Dorsolateral prefrontal cortex (tissue), 120 donors: ENCODE measurements at regions of chr13 and their contacts with region 1.

Region 1: GRCh38 chr13:76991796-76992547 is at the start of gene CLN5:
- DNase-seq: peak; percentile 81 to 97 (median 90)
- H3K4me3 ChIP-seq: peak within 1 kb of the TSS; percentile 57 to 96 (median 85)
- H3K27ac ChIP-seq: peak within 1 kb of the TSS; percentile 57 to 97 (median 91)
- H3K27me3 ChIP-seq: no peaks in the 10 kb centered on the region
- CTCF ChIP-seq: peak in 43 of 56 donors; percentile 6 to 63 (median 34)
- total RNA-seq, gene CLN5: 15.1 to 34.3 (median 21.5) TPM

Region 2: GRCh38 chr13:75675421-75675820 is 1316.6 kb before region 1 on chr13:
- intact Hi-C with region 1: loop called in 1 of 2 experiments (anchors 5 kb)
- DNase-seq: no peak
- H3K4me3 ChIP-seq: peak overlapping the region in 4 of 59 donors; percentile 22 to 24 (median 22)
- H3K27ac ChIP-seq: no peak overlapping the region
- H3K27me3 ChIP-seq: no peaks in the 10 kb centered on the region
- CTCF ChIP-seq: no peak

Region 3: GRCh38 chr13:76886292-76887075 is 105.5 kb before region 1 on chr13 and contains the start of gene KCTD12:
- intact Hi-C with region 1: loop called in 1 of 2 experiments (anchors 10 kb)
- DNase-seq: peak; percentile 36 to 82 (median 70)
- H3K4me3 ChIP-seq: peak within 1 kb of the TSS; percentile 56 to 83 (median 72)
- H3K27ac ChIP-seq: peak within 1 kb of the TSS in 58 of 59 donors; percentile 12 to 93 (median 82)
- H3K27me3 ChIP-seq: peaks cover 0 to 5% (median 0%) of the 10 kb centered on the region in 45 donors
- CTCF ChIP-seq: peak in 40 of 56 donors; percentile 14 to 56 (median 30)
- total RNA-seq, gene KCTD12: 17.8 to 89.0 (median 40.6) TPM

Region 4: GRCh38 chr13:77026818-77027585 is 35.0 kb after region 1 on chr13 and contains the start of gene FBXL3:
- intact Hi-C with region 1: loop called (anchors 2 kb)
- DNase-seq: peak; percentile 70 to 87 (median 84)
- H3K4me3 ChIP-seq: peak within 1 kb of the TSS; percentile 80 to 99 (median 91)
- H3K27ac ChIP-seq: peak within 1 kb of the TSS; percentile 84 to 100 (median 99)
- H3K27me3 ChIP-seq: no peaks in the 10 kb centered on the region
- CTCF ChIP-seq: peak in 18 of 56 donors; percentile 5 to 51 (median 12)
- total RNA-seq, gene FBXL3: 48.6 to 79.1 (median 59.0) TPM